ENCODE measurements at regions of chr1 and their contacts with region 1.

Region 1: GRCh38 chr1:16386454-16387113 is 19.5 kb downstream of the SZRD1 start:
- DNase-seq: no peak
- H3K4me3 ChIP-seq: no peak overlapping the region
- H3K4me3 Mint-ChIP-seq: peak overlapping the region; percentile 58 to 88 (median 81)
- H3K27ac ChIP-seq: peak overlapping the region; percentile 58
- H3K27ac Mint-ChIP-seq: peak overlapping the region; percentile 61 to 95 (median 68)
- H3K4me1 ChIP-seq: peaks cover 70% of the 10 kb centered on the region
- H3K4me1 Mint-ChIP-seq: peaks cover 49 to 78% (median 66%) of the 10 kb centered on the region in 4 donors
- H3K27me3 ChIP-seq: no peaks in the 10 kb centered on the region
- H3K27me3 Mint-ChIP-seq: no peaks in the 10 kb centered on the region

Region 2: GRCh38 chr1:16276302-16277030 is 110.1 kb before region 1 on chr1:
- CTCF ChIA-PET with region 1: no interaction called
- POLR2A ChIA-PET with region 1: no interaction called
- intact Hi-C with region 1: no loop called
- DNase-seq: no peak
- H3K4me3 ChIP-seq: no peak overlapping the region
- H3K4me3 Mint-ChIP-seq: no peak overlapping the region
- H3K27ac ChIP-seq: no peak overlapping the region
- H3K27ac Mint-ChIP-seq: no peak overlapping the region
- H3K4me1 ChIP-seq: no peaks in the 10 kb centered on the region
- H3K4me1 Mint-ChIP-seq: peaks cover 7 to 18% (median 9%) of the 10 kb centered on the region in 4 donors
- H3K27me3 ChIP-seq: no peaks in the 10 kb centered on the region
- H3K27me3 Mint-ChIP-seq: no peaks in the 10 kb centered on the region

Region 3: GRCh38 chr1:16318555-16318954 is 68.0 kb before region 1 on chr1:
- CTCF ChIA-PET with region 1: no interaction called
- POLR2A ChIA-PET with region 1: no interaction called
- intact Hi-C with region 1: no loop called
- DNase-seq: no peak
- H3K4me3 ChIP-seq: no peak overlapping the region
- H3K4me3 Mint-ChIP-seq: no peak overlapping the region
- H3K27ac ChIP-seq: no peak overlapping the region
- H3K27ac Mint-ChIP-seq: no peak overlapping the region
- H3K4me1 ChIP-seq: no peaks in the 10 kb centered on the region
- H3K4me1 Mint-ChIP-seq: peaks cover 13 to 24% (median 17%) of the 10 kb centered on the region in 4 donors
- H3K27me3 ChIP-seq: no peaks in the 10 kb centered on the region
- H3K27me3 Mint-ChIP-seq: no peaks in the 10 kb centered on the region

Region 4: GRCh38 chr1:16334655-16335340 is 51.8 kb before region 1 on chr1:
- CTCF ChIA-PET with region 1: no interaction called
- POLR2A ChIA-PET with region 1: no interaction called
- intact Hi-C with region 1: no loop called
- DNase-seq: no peak
- H3K4me3 ChIP-seq: no peak overlapping the region
- H3K4me3 Mint-ChIP-seq: no peak overlapping the region
- H3K27ac ChIP-seq: no peak overlapping the region
- H3K27ac Mint-ChIP-seq: peak overlapping the region in 1 of 7 donors; percentile 42
- H3K4me1 ChIP-seq: peaks cover 11% of the 10 kb centered on the region
- H3K4me1 Mint-ChIP-seq: peaks cover 20 to 46% (median 25%) of the 10 kb centered on the region in 4 donors
- H3K27me3 ChIP-seq: no peaks in the 10 kb centered on the region
- H3K27me3 Mint-ChIP-seq: no peaks in the 10 kb centered on the region

Region 5: DNA sequence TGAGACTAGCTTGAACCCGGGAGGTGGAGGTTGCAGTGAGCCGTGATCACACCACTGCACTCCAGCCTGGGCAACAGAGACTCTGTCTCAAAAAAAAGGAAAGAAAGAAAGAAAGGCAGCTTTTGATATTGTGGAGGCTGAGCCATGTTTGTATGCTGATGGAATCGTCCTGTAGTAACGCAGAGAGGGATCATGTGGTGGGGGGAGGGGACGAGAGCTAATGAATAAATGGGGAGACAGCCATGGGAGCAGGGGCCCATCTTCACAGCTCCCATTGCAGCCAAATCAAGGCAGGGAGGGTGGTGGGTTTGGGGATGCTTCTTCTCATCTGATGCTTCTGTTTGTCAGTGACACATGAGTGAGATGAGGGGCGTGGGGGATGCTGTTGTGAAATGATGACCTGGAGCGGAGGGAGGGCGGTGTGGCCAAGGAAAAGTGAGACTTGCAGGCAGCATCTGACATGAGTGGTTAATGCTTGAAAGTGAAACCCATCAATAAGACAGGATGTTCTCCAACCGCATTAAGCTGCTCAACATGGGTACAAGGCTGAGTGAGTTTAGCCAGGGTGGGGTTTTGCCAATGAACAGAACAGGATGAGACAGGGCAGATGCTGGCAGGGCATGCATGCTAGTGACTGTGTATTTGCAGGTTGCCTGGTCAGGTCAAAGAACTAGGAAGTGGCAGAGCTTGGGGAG is 34.0 kb after region 1 on chr1:
- CTCF ChIA-PET with region 1: no interaction called
- POLR2A ChIA-PET with region 1: interaction called, 13 read pairs
- intact Hi-C with region 1: no loop called
- DNase-seq: peak; percentile 65 to 77 (median 72)
- H3K4me3 ChIP-seq: peak overlapping the region in 1 of 2 donors; percentile 9
- H3K4me3 Mint-ChIP-seq: peak overlapping the region; percentile 52 to 87 (median 82)
- H3K27ac ChIP-seq: peak overlapping the region; percentile 36
- H3K27ac Mint-ChIP-seq: peak overlapping the region; percentile 80 to 93 (median 93)
- H3K4me1 ChIP-seq: peaks cover 30% of the 10 kb centered on the region
- H3K4me1 Mint-ChIP-seq: peaks cover 24 to 35% (median 29%) of the 10 kb centered on the region in 4 donors
- H3K27me3 ChIP-seq: no peaks in the 10 kb centered on the region
- H3K27me3 Mint-ChIP-seq: no peaks in the 10 kb centered on the region

Region 6: GRCh38 chr1:16491056-16491962 is 104.7 kb after region 1 on chr1:
- CTCF ChIA-PET with region 1: no interaction called
- POLR2A ChIA-PET with region 1: no interaction called
- intact Hi-C with region 1: no loop called
- DNase-seq: no peak
- H3K4me3 ChIP-seq: no peak overlapping the region
- H3K4me3 Mint-ChIP-seq: no peak overlapping the region
- H3K27ac ChIP-seq: no peak overlapping the region
- H3K27ac Mint-ChIP-seq: peak overlapping the region in 1 of 7 donors; percentile 12
- H3K4me1 ChIP-seq: no peaks in the 10 kb centered on the region
- H3K4me1 Mint-ChIP-seq: peaks cover 2 to 13% (median 6%) of the 10 kb centered on the region in 4 donors
- H3K27me3 ChIP-seq: no peaks in the 10 kb centered on the region
- H3K27me3 Mint-ChIP-seq: no peaks in the 10 kb centered on the region

Measured in CD4-positive, alpha-beta memory T cell (primary cell).